CD4-positive, alpha-beta T cell (primary cell): ENCODE measurements at regions of chr22 and their contacts with region 1.

Region 1: GRCh38 chr22:22848364-22848866 is 39.2 kb upstream of the IGLL5 start:
- DNase-seq: peak; percentile 53 to 84 (median 63)
- ATAC-seq: peak; percentile 80
- H3K4me3 ChIP-seq: no peak overlapping the region
- H3K4me3 Mint-ChIP-seq: no peak overlapping the region
- H3K27ac ChIP-seq: no peak overlapping the region
- H3K27ac Mint-ChIP-seq: no peak overlapping the region
- H3K4me1 ChIP-seq: peaks cover 22% of the 10 kb centered on the region
- H3K4me1 Mint-ChIP-seq: peaks cover 64% of the 10 kb centered on the region
- H3K27me3 ChIP-seq: no peaks in the 10 kb centered on the region
- H3K27me3 Mint-ChIP-seq: no peaks in the 10 kb centered on the region
- CTCF ChIP-seq: peak; percentile 98

Region 2: GRCh38 chr22:22818861-22819855 is 29.3 kb before region 1 on chr22:
- CTCF ChIA-PET with region 1: interaction called, 8 read pairs
- POLR2A ChIA-PET with region 1: interaction called, 7 read pairs
- intact Hi-C with region 1: loop called (anchors 2 kb)
- DNase-seq: peak in 7 of 14 experiments; percentile 29 to 87 (median 58)
- ATAC-seq: peak; percentile 54
- H3K4me3 ChIP-seq: peak overlapping the region; percentile 54
- H3K4me3 Mint-ChIP-seq: peak overlapping the region; percentile 71
- H3K27ac ChIP-seq: peak overlapping the region; percentile 68 to 83
- H3K27ac Mint-ChIP-seq: peak overlapping the region; percentile 97
- H3K4me1 ChIP-seq: peaks cover 95% of the 10 kb centered on the region
- H3K4me1 Mint-ChIP-seq: peaks cover 99% of the 10 kb centered on the region
- H3K27me3 ChIP-seq: no peaks in the 10 kb centered on the region
- H3K27me3 Mint-ChIP-seq: no peaks in the 10 kb centered on the region
- CTCF ChIP-seq: no peak

Region 3: GRCh38 chr22:22870577-22871404 is 22.4 kb after region 1 on chr22:
- CTCF ChIA-PET with region 1: interaction called, 6 read pairs
- POLR2A ChIA-PET with region 1: no interaction called
- intact Hi-C with region 1: loop called in 1 of 2 experiments (anchors 2 kb)
- DNase-seq: peak in 1 of 14 experiments; percentile 24
- ATAC-seq: no peak
- H3K4me3 ChIP-seq: no peak overlapping the region
- H3K4me3 Mint-ChIP-seq: no peak overlapping the region
- H3K27ac ChIP-seq: no peak overlapping the region
- H3K27ac Mint-ChIP-seq: no peak overlapping the region
- H3K4me1 ChIP-seq: peaks cover 13% of the 10 kb centered on the region
- H3K4me1 Mint-ChIP-seq: peaks cover 11% of the 10 kb centered on the region
- H3K27me3 ChIP-seq: no peaks in the 10 kb centered on the region
- H3K27me3 Mint-ChIP-seq: no peaks in the 10 kb centered on the region
- CTCF ChIP-seq: no peak

Region 4: GRCh38 chr22:22877523-22878210 is 29.3 kb after region 1 on chr22:
- CTCF ChIA-PET with region 1: interaction called, 9 read pairs
- POLR2A ChIA-PET with region 1: no interaction called
- intact Hi-C with region 1: loop called (anchors 2 to 5 kb)
- DNase-seq: peak; percentile 65 to 89 (median 75)
- ATAC-seq: peak; percentile 67
- H3K4me3 ChIP-seq: no peak overlapping the region
- H3K4me3 Mint-ChIP-seq: no peak overlapping the region
- H3K27ac ChIP-seq: no peak overlapping the region
- H3K27ac Mint-ChIP-seq: no peak overlapping the region
- H3K4me1 ChIP-seq: peaks cover 3% of the 10 kb centered on the region
- H3K4me1 Mint-ChIP-seq: no peaks in the 10 kb centered on the region
- H3K27me3 ChIP-seq: no peaks in the 10 kb centered on the region
- H3K27me3 Mint-ChIP-seq: no peaks in the 10 kb centered on the region
- CTCF ChIP-seq: peak; percentile 84

Region 5: DNA sequence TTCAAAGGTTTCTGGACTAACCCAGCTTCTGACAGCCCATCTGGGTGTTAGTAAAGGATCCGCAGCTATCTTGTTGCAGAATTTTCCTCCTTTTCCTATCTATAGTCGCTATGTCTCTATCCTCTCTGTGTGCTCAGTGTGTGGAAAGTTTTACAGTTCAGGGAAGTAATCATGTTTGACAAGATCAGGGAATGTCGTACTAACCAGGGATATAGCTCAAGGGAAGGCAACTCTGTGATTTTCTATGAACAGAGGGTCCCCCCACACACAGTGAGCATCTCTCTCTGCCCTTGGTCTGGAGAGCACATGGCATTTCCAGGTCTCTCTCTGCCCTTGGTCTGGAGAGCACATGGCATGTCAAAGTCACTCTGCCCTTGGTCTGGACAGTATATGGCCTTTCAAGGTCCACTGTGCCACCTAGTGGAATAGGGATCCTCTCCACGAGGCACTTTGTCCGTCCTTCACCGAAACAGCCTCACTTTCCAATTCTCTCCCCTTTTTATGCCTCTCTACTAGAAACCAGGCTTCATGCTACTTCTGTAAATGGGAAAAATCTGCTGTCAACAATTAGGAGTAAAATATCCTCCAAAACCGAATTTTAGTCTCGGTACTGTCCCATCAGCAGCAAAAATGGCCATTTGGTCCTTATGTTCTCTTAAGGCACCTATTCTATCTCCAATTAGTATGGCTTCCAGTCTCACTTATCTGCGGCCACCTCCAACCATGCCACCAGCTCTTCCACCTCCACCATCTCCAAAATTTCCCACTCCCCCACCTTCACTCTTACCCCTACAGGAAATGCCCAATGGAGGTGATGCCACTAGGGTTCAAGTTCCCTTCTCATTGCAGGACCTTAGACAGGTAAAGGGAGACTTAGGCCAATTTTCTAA is 127.9 kb after region 1 on chr22:
- CTCF ChIA-PET with region 1: no interaction called
- POLR2A ChIA-PET with region 1: no interaction called
- intact Hi-C with region 1: no loop called
- DNase-seq: no peak
- ATAC-seq: no peak
- H3K4me3 ChIP-seq: no peak overlapping the region
- H3K4me3 Mint-ChIP-seq: no peak overlapping the region
- H3K27ac ChIP-seq: no peak overlapping the region
- H3K27ac Mint-ChIP-seq: no peak overlapping the region
- H3K4me1 ChIP-seq: no peaks in the 10 kb centered on the region
- H3K4me1 Mint-ChIP-seq: no peaks in the 10 kb centered on the region
- H3K27me3 ChIP-seq: peaks cover 0 to 9% of the 10 kb centered on the region in 2 experiments
- H3K27me3 Mint-ChIP-seq: peaks cover 38% of the 10 kb centered on the region
- CTCF ChIP-seq: no peak

Region 6: DNA sequence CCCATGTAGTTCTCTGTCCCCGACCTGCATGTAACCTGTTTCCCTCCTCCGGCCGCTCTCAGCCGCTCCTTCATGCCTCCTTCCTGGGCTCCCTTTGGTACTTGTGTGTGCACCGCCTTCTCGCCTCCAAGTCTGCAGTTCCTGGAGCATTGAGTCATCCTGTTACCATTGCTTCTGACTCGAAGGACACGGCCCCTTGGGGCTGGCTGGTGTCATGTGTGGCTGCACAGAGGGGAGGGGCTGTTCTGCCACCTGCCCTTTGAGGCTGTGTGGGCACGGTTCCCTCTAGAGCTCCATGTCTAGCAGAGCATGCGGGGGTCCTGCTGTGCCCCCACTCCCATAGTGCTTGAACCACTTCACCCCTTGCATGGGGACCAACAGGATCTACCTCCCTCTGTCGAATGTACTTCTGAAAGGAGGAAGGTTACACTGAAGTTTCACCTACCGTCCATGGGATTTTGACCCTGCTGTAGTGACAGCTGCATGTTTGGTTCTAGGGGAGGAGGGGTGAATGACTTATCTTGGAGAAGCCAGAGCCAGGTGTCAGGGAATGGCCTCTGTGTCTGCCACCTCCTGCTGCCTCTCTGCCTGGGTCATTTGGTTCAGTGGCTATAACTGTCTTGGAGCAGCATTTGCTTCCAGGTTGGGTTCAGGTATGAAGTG is 371.5 kb after region 1 on chr22:
- CTCF ChIA-PET with region 1: no interaction called
- POLR2A ChIA-PET with region 1: no interaction called
- intact Hi-C with region 1: no loop called
- DNase-seq: peak in 13 of 14 experiments; percentile 16 to 70 (median 46)
- ATAC-seq: peak; percentile 76
- H3K4me3 ChIP-seq: peak overlapping the region; percentile 42
- H3K4me3 Mint-ChIP-seq: peak overlapping the region; percentile 84
- H3K27ac ChIP-seq: peak overlapping the region; percentile 39 to 47
- H3K27ac Mint-ChIP-seq: peak overlapping the region; percentile 83
- H3K4me1 ChIP-seq: peaks cover 97% of the 10 kb centered on the region
- H3K4me1 Mint-ChIP-seq: peaks cover 95% of the 10 kb centered on the region
- H3K27me3 ChIP-seq: no peaks in the 10 kb centered on the region
- H3K27me3 Mint-ChIP-seq: no peaks in the 10 kb centered on the region
- CTCF ChIP-seq: no peak